Transverse colon (tissue), 4 donors: ENCODE measurements at regions of chr4 and their contacts with region 1.

Region 1: GRCh38 chr4:83510442-83510841 is 25.5 kb upstream of the GPAT3 start:
- DNase-seq: no peak
- H3K4me3 ChIP-seq: no peak overlapping the region
- H3K27ac ChIP-seq: no peak overlapping the region
- H3K4me1 ChIP-seq: no peaks in the 10 kb centered on the region
- H3K27me3 ChIP-seq: no peaks in the 10 kb centered on the region
- CTCF ChIP-seq: no peak
- EP300 ChIP-seq: no peak
- POLR2A ChIP-seq: no peak

Region 2: DNA sequence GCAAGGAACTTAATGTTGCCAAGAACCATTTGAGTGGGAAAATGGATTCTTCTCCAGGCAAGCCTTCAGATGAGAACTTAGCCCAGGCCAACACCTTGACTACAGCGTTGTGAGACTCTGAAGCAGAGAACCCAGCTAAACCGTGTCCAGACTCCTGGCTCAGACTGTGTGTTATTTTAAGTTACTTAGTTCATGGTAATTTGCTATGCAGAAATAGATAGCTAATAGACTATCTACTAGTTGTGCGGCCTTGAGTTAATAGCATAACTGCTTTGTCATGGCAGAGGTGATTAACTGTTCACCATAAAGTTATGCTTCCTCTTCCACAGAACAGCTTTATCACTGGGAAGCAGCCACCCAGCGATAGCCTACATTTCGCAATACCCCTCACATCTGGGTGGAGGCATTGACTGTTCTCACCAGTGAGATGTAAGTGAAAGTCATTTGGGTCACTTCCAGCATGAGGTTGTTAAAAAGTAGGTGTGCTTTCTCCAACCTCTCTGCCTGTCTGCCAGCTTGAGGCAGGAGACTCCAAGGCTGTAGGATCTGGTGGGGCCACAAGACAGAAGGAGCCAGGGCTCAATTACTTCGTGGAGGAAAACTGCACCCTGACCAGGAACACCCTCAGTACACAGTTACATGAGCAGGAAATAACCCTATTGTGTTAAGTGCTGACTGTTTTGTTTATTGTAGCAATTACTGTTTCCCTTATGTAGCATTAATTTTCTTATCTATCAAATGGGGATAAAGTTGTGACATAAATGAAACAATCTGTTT is 119.7 kb after region 1 on chr4:
- in situ Hi-C with region 1: loop called (anchors 5 to 10 kb)
- intact Hi-C with region 1: no loop called
- DNase-seq: peak; percentile 83
- H3K4me3 ChIP-seq: no peak overlapping the region
- H3K27ac ChIP-seq: peak overlapping the region; percentile 61 to 81 (median 74)
- H3K4me1 ChIP-seq: peaks cover 8 to 47% (median 24%) of the 10 kb centered on the region in 4 donors
- H3K27me3 ChIP-seq: no peaks in the 10 kb centered on the region
- CTCF ChIP-seq: no peak
- EP300 ChIP-seq: no peak
- POLR2A ChIP-seq: no peak